ENCODE measurements at regions of chr2 and their contacts with region 1.

Region 1: GRCh38 chr2:62410015-62410453 is 96.0 kb downstream of the TMEM17 start:
- DNase-seq: peak; percentile 37
- ATAC-seq: peak; percentile 38
- H3K4me3 Mint-ChIP-seq: no peak overlapping the region
- H3K27ac Mint-ChIP-seq: peak overlapping the region; percentile 58
- H3K4me1 Mint-ChIP-seq: peaks cover 19% of the 10 kb centered on the region
- H3K27me3 Mint-ChIP-seq: no peaks in the 10 kb centered on the region

Region 2: DNA sequence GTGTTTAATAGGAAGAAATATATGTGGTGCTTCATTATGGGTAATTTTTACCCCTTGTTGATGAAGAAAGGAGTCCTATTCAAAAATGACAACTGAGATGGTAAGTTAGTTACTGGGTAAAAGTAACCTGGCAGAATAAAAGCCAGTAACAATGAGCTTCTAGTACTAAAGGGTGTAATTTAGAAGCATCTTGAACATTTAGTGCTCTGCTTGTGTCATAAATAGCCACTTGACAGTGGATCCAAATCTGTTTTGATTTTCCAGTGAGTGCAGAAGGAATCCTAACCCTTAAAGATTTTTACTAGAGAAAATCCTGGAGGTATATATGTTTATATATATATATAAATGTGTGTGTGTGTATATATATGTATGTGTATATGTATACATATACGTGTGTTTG is 489.5 kb before region 1 on chr2:
- CTCF ChIA-PET with region 1: interaction called, 14 read pairs
- POLR2A ChIA-PET with region 1: no interaction called
- DNase-seq: no peak
- ATAC-seq: no peak
- H3K4me3 Mint-ChIP-seq: no peak overlapping the region
- H3K27ac Mint-ChIP-seq: no peak overlapping the region
- H3K4me1 Mint-ChIP-seq: no peaks in the 10 kb centered on the region
- H3K27me3 Mint-ChIP-seq: no peaks in the 10 kb centered on the region

Region 3: GRCh38 chr2:61993444-61994024 is 416.5 kb before region 1 on chr2:
- CTCF ChIA-PET with region 1: interaction called, 32 read pairs
- POLR2A ChIA-PET with region 1: no interaction called
- DNase-seq: peak; percentile 48
- ATAC-seq: peak; percentile 70
- H3K4me3 Mint-ChIP-seq: no peak overlapping the region
- H3K27ac Mint-ChIP-seq: no peak overlapping the region
- H3K4me1 Mint-ChIP-seq: peaks cover 6% of the 10 kb centered on the region
- H3K27me3 Mint-ChIP-seq: no peaks in the 10 kb centered on the region

Region 4: DNA sequence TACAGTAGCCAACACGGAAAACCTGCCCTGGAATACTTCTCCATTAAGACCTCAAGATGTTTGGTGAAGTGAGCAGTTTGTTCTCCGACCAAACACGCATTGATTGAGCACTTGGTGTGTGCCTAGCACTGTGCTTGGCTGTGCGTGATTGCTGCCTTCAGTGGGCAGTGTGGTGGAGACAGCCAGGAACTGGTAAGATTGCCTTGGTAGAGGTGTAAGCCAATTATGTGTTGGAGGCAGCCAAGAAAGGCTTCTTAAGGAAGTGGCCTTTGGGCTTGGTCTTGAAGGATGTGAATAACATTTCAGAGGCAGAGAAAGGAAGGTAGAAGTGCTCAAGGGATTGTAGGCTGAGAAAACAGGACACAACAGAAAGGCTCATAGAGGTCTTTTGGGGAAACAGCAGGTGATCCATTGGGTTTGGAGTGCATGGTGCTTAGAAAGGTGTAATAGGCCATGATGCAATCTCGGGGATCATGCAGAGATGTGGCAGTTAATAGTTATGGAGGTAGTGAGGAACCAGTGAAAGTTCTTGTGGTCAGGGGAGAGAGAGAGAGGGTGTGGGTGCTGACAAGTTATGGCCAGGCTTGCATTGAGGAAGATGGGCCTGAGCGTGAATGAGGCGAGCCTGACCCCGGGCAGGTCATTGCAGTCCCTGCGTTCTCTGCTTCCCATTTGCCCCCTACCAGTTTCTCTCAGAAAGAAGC is 207.9 kb before region 1 on chr2:
- CTCF ChIA-PET with region 1: interaction called, 13 read pairs
- POLR2A ChIA-PET with region 1: interaction called, 3 read pairs
- DNase-seq: peak; percentile 50
- ATAC-seq: peak; percentile 14
- H3K4me3 Mint-ChIP-seq: peak overlapping the region; percentile 96
- H3K27ac Mint-ChIP-seq: peak overlapping the region; percentile 75
- H3K4me1 Mint-ChIP-seq: peaks cover 90% of the 10 kb centered on the region
- H3K27me3 Mint-ChIP-seq: no peaks in the 10 kb centered on the region

Measured in activated CD8-positive, alpha-beta T cell treated with anti-CD3 and anti-CD28 coated beads, Interleukin-2, amount 10 ng/mL, durations not matched to agents 7 days and 5 days (primary cell).